Mammary epithelial cell (primary cell): ENCODE measurements at regions of chr2 and their contacts with region 1.

Region 1: DNA sequence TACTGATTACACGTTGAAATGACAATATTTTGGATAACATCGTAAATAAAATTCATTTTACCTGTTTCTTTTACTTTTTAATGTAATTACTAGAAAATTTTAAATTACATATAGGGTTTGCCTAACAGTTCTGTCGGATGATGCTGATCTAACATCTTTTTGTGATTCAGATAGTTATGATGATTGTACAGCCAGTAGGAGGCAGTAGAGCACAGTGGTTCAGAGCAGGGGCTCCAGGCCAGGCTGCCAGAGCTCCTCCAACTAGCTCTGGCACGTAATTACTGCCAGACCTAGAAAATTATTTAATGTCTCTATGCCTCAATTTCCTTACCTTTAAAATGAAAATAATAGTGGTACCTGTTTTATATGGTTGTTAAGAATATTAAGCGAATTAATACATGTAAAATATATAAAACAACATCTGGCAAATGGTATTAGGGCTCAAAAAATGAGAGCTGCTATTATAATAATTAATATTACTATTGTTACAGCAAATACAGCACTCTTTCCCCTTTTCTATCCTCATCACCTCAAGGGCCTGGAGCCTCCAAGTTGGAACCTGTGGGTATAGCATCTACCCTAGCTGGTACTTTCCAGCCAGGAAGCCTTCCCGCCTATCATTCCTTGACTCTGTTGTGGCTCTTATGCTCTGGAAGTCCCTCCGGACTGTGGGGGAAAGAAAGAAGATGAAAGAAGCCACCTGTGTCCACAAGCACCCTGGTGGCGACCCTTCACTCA is 47.7 kb upstream of the PLA2R1 start:
- DNase-seq: peak; percentile 33
- H3K4me3 ChIP-seq: no peak overlapping the region
- H3K27ac ChIP-seq: peak overlapping the region; percentile 31
- H3K4me1 ChIP-seq: peaks cover 21% of the 10 kb centered on the region
- H3K27me3 ChIP-seq: no peaks in the 10 kb centered on the region
- CTCF ChIP-seq: peak; percentile 81 to 84

Region 2: GRCh38 chr2:160288324-160288723 is 178.2 kb after region 1 on chr2:
- CTCF ChIA-PET with region 1: no interaction called
- dilution Hi-C with region 1: no loop called
- in situ Hi-C with region 1: no loop called
- intact Hi-C with region 1: loop called (anchors 5 kb)
- DNase-seq: peak; percentile 76
- H3K4me3 ChIP-seq: no peak overlapping the region
- H3K27ac ChIP-seq: peak overlapping the region; percentile 81
- H3K4me1 ChIP-seq: peaks cover 20% of the 10 kb centered on the region
- H3K27me3 ChIP-seq: no peaks in the 10 kb centered on the region
- CTCF ChIP-seq: no peak

Region 3: GRCh38 chr2:160324161-160324800 is 214.2 kb after region 1 on chr2:
- CTCF ChIA-PET with region 1: no interaction called
- dilution Hi-C with region 1: no loop called
- in situ Hi-C with region 1: no loop called
- intact Hi-C with region 1: loop called (anchors 1 kb)
- DNase-seq: peak; percentile 32
- H3K4me3 ChIP-seq: no peak overlapping the region
- H3K27ac ChIP-seq: no peak overlapping the region
- H3K4me1 ChIP-seq: no peaks in the 10 kb centered on the region
- H3K27me3 ChIP-seq: no peaks in the 10 kb centered on the region
- CTCF ChIP-seq: peak; percentile 80 to 84

Region 4: DNA sequence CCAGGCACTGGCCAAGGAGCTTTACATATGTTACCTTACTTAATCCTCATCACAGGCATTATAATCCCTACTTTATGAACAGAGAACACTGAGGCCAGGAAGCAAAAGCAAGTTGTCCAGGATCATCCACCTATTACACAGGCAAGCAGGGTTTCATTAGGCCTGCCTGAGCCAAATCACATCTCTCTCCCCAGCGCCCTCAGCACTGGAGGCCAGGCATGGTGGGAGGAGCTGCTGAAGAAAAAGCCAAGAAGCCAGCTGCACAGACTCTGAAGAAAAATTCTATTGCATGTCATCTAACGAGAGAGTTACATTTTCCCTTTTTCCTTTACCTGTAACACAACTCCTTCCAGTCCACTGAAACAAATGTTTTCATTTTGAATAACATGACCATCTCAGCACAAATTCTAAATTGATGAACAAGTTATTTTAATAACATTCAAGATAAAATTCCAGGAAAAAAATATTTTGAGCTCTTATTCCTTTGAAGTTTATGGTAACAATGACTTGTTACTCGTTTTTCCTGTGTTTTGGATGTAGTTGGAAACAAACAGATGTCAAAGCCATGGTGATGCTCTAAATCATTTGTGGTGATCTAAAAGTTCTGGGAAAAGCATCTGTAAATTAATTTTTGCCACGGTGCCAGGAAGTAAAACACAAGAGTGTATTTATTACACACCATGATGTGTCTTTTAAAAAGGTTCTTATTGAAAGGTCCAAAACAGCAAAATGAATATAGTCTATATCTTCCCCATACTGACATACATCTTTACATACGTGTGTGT is 229.0 kb after region 1 on chr2:
- CTCF ChIA-PET with region 1: no interaction called
- dilution Hi-C with region 1: no loop called
- in situ Hi-C with region 1: no loop called
- intact Hi-C with region 1: no loop called
- DNase-seq: no peak
- H3K4me3 ChIP-seq: no peak overlapping the region
- H3K27ac ChIP-seq: no peak overlapping the region
- H3K4me1 ChIP-seq: peaks cover 2% of the 10 kb centered on the region
- H3K27me3 ChIP-seq: no peaks in the 10 kb centered on the region
- CTCF ChIP-seq: no peak